Heart left ventricle (tissue), 16 donors: ENCODE measurements at regions of chr5 and their contacts with region 1.

Region 1: GRCh38 chr5:97764700-97765099 is 581.7 kb upstream of the RIOK2 start:
- DNase-seq: no peak
- ATAC-seq: no peak
- H3K4me3 ChIP-seq: no peak overlapping the region
- H3K27ac ChIP-seq: no peak overlapping the region
- H3K4me1 ChIP-seq: no peaks in the 10 kb centered on the region
- H3K27me3 ChIP-seq: no peaks in the 10 kb centered on the region
- CTCF ChIP-seq: no peak
- POLR2A ChIP-seq: no peak

Region 2: DNA sequence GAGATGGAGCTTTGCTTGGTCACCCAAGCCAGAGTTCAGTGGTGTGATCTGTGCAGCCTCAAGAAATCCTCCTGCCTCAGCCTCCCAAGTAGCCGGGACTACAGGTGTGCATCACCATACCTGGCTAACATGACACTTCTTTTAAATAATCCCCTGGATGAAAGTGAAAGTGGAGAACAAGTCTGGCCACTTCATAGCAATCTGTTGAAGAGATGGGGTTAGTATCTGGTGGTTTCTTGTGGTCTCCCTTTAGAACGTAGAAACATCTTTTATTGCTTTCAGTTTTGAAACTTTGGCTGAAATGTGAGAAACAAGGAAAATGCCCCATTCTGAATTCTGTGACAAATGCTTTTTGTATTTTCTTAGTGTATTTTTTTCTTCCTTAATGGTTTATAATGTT is 129.1 kb before region 1 on chr5:
- intact Hi-C with region 1: no loop called
- DNase-seq: no peak
- ATAC-seq: no peak
- H3K4me3 ChIP-seq: no peak overlapping the region
- H3K27ac ChIP-seq: no peak overlapping the region
- H3K4me1 ChIP-seq: no peaks in the 10 kb centered on the region
- H3K27me3 ChIP-seq: no peaks in the 10 kb centered on the region
- CTCF ChIP-seq: no peak
- POLR2A ChIP-seq: no peak

Region 3: GRCh38 chr5:97714424-97714823 is 50.3 kb before region 1 on chr5:
- intact Hi-C with region 1: loop called in 1 of 10 experiments (anchors 1 kb)
- DNase-seq: no peak
- ATAC-seq: no peak
- H3K4me3 ChIP-seq: no peak overlapping the region
- H3K27ac ChIP-seq: no peak overlapping the region
- H3K4me1 ChIP-seq: no peaks in the 10 kb centered on the region
- H3K27me3 ChIP-seq: no peaks in the 10 kb centered on the region
- CTCF ChIP-seq: no peak
- POLR2A ChIP-seq: no peak

Region 4: DNA sequence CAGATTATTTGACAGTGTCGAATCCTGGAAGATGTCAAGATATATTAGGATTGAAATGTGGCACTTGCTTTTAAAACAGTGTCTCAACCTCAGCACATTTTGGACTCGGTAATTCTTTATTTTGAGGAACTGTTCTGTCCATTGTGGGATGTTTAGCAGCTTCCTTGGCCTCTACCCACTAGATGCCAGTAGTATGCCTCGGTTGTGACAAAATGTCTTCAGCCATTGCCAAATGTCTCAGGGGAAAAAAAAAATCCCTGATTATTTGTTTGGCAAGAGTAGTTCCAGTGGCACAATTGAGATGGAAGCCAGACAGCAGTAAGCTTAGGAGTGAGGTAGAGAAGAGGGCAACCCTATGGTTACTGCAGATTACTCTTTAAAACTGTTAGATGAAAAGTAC is 112.9 kb after region 1 on chr5:
- intact Hi-C with region 1: no loop called
- DNase-seq: no peak
- ATAC-seq: no peak
- H3K4me3 ChIP-seq: no peak overlapping the region
- H3K27ac ChIP-seq: no peak overlapping the region
- H3K4me1 ChIP-seq: no peaks in the 10 kb centered on the region
- H3K27me3 ChIP-seq: no peaks in the 10 kb centered on the region
- CTCF ChIP-seq: no peak
- POLR2A ChIP-seq: no peak

Region 5: DNA sequence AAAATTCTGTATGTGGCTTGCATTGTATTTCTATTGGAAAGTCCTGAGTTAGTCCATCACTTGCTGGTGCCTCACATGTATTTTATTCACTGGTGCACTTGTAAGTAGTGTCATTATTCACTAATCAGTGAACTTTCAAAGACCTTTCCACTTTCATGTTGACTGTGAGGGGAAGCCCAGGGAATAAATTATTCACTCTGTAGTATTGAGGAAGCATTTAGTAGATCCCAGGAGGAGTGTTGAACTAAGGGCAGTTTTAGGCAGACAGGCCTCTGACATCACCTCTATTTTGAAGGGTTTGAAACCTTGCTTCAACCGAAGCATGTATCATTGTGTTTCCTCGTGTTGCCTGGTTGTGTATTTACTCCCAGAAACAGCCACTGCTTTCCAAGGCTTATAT is 123.7 kb after region 1 on chr5:
- intact Hi-C with region 1: no loop called
- DNase-seq: no peak
- ATAC-seq: no peak
- H3K4me3 ChIP-seq: no peak overlapping the region
- H3K27ac ChIP-seq: no peak overlapping the region
- H3K4me1 ChIP-seq: no peaks in the 10 kb centered on the region
- H3K27me3 ChIP-seq: no peaks in the 10 kb centered on the region
- CTCF ChIP-seq: no peak
- POLR2A ChIP-seq: no peak

Region 6: GRCh38 chr5:98768160-98769005 is 1003.7 kb after region 1 on chr5:
- intact Hi-C with region 1: loop called in 1 of 10 experiments (anchors 10 kb)
- DNase-seq: peak in 4 of 5 donors; percentile 27 to 51 (median 43)
- ATAC-seq: peak in 3 of 4 donors; percentile 31 to 70 (median 59)
- H3K4me3 ChIP-seq: peak overlapping the region; percentile 55 to 90 (median 70)
- H3K27ac ChIP-seq: peak overlapping the region in 9 of 12 donors; percentile 36 to 79 (median 69)
- H3K4me1 ChIP-seq: peaks cover 0 to 54% (median 18%) of the 10 kb centered on the region in 12 donors
- H3K27me3 ChIP-seq: peaks cover 0 to 49% (median 0%) of the 10 kb centered on the region in 9 donors
- CTCF ChIP-seq: peak; percentile 62 to 91 (median 81)
- POLR2A ChIP-seq: no peak